H1 (cell line): ENCODE measurements at regions of chr20 and their contacts with region 1.

Region 1: GRCh38 chr20:13302647-13303450 is 81.8 kb downstream of the ISM1 start:
- DNase-seq: peak in 1 of 2 experiments; percentile 67
- H3K4me3 ChIP-seq: no peak overlapping the region
- H3K27ac ChIP-seq: no peak overlapping the region
- H3K4me1 ChIP-seq: no peaks in the 10 kb centered on the region
- H3K27me3 ChIP-seq: no peaks in the 10 kb centered on the region
- CTCF ChIP-seq: peak; percentile 66 to 77 (median 74)
- EP300 ChIP-seq: no peak
- POLR2A ChIP-seq: no peak
- RAD21 ChIP-seq: peak; percentile 67 to 70

Region 2: DNA sequence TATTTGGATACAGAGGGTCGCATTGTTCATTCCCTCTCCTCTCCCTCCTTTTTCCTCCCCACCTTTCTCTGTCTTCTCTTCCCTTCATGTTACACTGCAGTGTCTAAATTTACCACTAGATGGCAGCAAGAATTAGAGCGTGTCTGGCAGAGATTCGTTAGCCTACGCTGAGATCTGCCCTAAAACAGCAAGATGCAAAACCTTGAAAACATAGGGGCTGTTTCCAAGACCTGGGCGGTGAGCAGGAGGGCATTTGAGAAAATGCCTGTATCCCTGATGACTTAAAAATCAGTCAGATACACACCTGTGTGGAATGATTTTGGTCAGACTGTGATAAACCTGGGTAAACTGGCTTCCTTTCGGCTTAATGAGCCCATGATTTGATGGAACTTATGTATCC is 183.3 kb before region 1 on chr20:
- CTCF ChIA-PET with region 1: interaction called, 43 read pairs
- POLR2A ChIA-PET with region 1: no interaction called
- DNase-seq: peak in 1 of 2 experiments; percentile 15
- H3K4me3 ChIP-seq: no peak overlapping the region
- H3K27ac ChIP-seq: no peak overlapping the region
- H3K4me1 ChIP-seq: no peaks in the 10 kb centered on the region; a peak in 1 of 7 replicates
- H3K27me3 ChIP-seq: no peaks in the 10 kb centered on the region
- CTCF ChIP-seq: peak in 2 of 3 experiments; percentile 86 to 89; a peak in 3 of 4 replicates
- EP300 ChIP-seq: no peak
- POLR2A ChIP-seq: no peak
- RAD21 ChIP-seq: peak; percentile 92 to 94

Region 3: GRCh38 chr20:13274275-13274861 is 28.5 kb before region 1 on chr20:
- CTCF ChIA-PET with region 1: interaction called, 10 read pairs
- POLR2A ChIA-PET with region 1: no interaction called
- DNase-seq: peak; percentile 19 to 70
- H3K4me3 ChIP-seq: peak overlapping the region in 1 of 4 experiments; percentile 36; a peak in 2 of 8 replicates
- H3K27ac ChIP-seq: no peak overlapping the region
- H3K4me1 ChIP-seq: peaks cover 2 to 6% (median 3%) of the 10 kb centered on the region in 4 experiments; a peak in 3 of 7 replicates
- H3K27me3 ChIP-seq: no peaks in the 10 kb centered on the region; a peak in 1 of 7 replicates
- CTCF ChIP-seq: no peak
- EP300 ChIP-seq: no peak
- POLR2A ChIP-seq: no peak
- RAD21 ChIP-seq: no peak

Region 4: DNA sequence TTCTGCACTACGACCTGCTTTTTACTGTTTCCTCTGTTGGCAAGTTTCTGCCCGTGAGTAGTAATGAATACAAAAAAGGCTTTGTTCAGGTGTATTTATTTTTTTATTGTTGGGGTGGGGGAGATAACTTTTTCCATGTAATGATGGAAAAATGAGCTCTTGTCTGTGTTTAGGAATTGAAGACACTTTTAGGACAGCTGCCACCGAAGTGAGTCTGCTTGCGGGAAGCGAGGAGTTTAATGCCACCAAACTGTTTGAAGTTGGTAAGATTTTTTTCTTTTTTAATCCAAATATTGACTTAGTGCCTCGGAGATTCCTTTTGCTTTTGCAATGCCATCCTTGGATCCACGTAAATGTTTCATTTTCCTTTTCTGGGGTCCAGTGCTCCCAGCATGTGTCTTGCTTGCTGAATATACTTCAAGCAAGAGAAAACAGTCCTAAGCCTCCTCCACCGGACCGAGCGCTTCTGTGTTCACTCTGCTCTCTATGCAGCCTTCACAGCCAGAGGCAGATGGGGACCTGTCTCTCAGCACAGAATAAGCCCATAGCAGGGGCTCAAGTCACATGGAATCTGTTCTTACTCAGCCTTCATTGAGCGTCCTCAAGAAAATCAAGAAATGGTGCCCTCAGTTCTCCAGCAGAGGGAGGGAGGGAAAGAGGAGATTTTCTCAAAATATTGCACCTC is 10.5 kb before region 1 on chr20:
- CTCF ChIA-PET with region 1: interaction called, 20 read pairs
- POLR2A ChIA-PET with region 1: no interaction called
- DNase-seq: peak in 1 of 2 experiments; percentile 39
- H3K4me3 ChIP-seq: no peak overlapping the region
- H3K27ac ChIP-seq: no peak overlapping the region
- H3K4me1 ChIP-seq: peaks cover 0 to 3% (median 0%) of the 10 kb centered on the region in 4 experiments; a peak in 1 of 7 replicates
- H3K27me3 ChIP-seq: no peaks in the 10 kb centered on the region
- CTCF ChIP-seq: no peak
- EP300 ChIP-seq: no peak
- POLR2A ChIP-seq: no peak
- RAD21 ChIP-seq: no peak